HCT116 (cell line): ENCODE measurements at regions of chr17 and their contacts with region 1.

Region 1: GRCh38 chr17:73231841-73232586 is 29.7 kb downstream of the CPSF4L start:
- DNase-seq: peak; percentile 87
- ATAC-seq: peak; percentile 89
- H3K4me3 ChIP-seq: peak overlapping the region; percentile 89 to 92
- H3K27ac ChIP-seq: peak overlapping the region; percentile 78
- H3K4me1 ChIP-seq: peaks cover 30 to 53% of the 10 kb centered on the region in 2 experiments
- H3K27me3 ChIP-seq: no peaks in the 10 kb centered on the region
- CTCF ChIP-seq: peak in 1 of 3 experiments; percentile 34; a peak in 1 of 6 replicates
- POLR2A ChIP-seq: peak; percentile 48
- RAD21 ChIP-seq: no peak

Region 2: GRCh38 chr17:72974605-72975232 is 257.3 kb before region 1 on chr17:
- CTCF ChIA-PET with region 1: no interaction called
- POLR2A ChIA-PET with region 1: no interaction called
- RAD21 ChIA-PET with region 1: no interaction called
- intact Hi-C with region 1: no loop called
- DNase-seq: no peak
- ATAC-seq: no peak
- H3K4me3 ChIP-seq: no peak overlapping the region
- H3K27ac ChIP-seq: no peak overlapping the region
- H3K4me1 ChIP-seq: peaks cover 31 to 44% of the 10 kb centered on the region in 2 experiments
- H3K27me3 ChIP-seq: no peaks in the 10 kb centered on the region
- CTCF ChIP-seq: no peak
- POLR2A ChIP-seq: no peak
- RAD21 ChIP-seq: no peak

Region 3: GRCh38 chr17:73192894-73193701 is 38.9 kb before region 1 on chr17 and contains the start of gene COG1:
- CTCF ChIA-PET with region 1: interaction called, 3 read pairs
- POLR2A ChIA-PET with region 1: interaction called, 4 read pairs
- RAD21 ChIA-PET with region 1: no interaction called
- intact Hi-C with region 1: loop called (anchors 2 kb)
- DNase-seq: peak; percentile 76
- ATAC-seq: peak; percentile 75
- H3K4me3 ChIP-seq: peak within 1 kb of the TSS; percentile 68 to 88
- H3K27ac ChIP-seq: peak within 1 kb of the TSS; percentile 98
- H3K4me1 ChIP-seq: peaks cover 0 to 35% of the 10 kb centered on the region in 2 experiments; a peak in 3 of 4 replicates
- H3K27me3 ChIP-seq: no peaks in the 10 kb centered on the region
- CTCF ChIP-seq: 0 out of 6 replicates have a peak, but pooled peaks of 1 of the 3 experiments have one; percentile 7
- POLR2A ChIP-seq: peak; percentile 7
- RAD21 ChIP-seq: no peak
- total RNA-seq, gene COG1: 44.6 TPM